H1 (cell line): ENCODE measurements at regions of chr7 and their contacts with region 1.

Region 1: DNA sequence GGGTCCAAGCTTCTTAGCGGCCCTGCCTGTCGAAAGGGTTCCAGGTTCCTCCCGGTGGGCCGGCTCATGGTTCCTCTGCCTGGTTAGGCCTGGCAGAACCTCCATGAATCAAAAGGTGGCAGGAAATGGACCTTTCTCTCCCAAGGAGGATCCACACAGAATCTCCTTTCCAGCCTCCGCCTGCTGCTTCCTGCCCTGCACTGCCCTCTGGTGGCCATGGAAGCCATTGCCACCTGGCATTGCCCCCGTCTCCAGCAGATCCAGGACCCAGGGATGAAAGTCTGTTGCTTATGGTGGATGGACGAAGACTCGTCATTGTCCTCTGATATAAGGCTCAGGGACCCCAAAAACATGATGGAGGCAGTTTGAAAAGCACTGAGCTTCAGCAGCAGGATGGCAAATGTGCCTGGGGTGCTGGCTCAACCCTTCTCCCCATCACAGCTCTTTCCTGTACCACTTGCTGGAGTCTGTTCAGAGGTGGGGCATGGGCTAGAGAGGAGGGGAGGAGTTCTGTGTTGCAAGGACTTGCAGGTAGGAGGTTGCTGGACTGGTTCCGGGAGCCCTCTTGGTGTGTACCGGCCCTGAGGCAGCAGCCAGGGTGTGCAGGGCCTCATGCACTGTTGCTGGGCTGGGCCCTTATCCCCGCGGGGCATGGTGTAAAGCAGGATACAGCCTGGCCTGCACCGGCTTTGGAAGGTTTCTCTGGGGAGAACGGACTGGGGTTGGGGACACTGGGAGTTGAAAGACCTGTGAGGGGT is 11.3 kb upstream of the INMT start:
- DNase-seq: peak in 1 of 2 experiments; percentile 97
- H3K4me3 ChIP-seq: no peak overlapping the region
- H3K27ac ChIP-seq: no peak overlapping the region
- H3K4me1 ChIP-seq: no peaks in the 10 kb centered on the region; a peak in 1 of 7 replicates
- H3K27me3 ChIP-seq: no peaks in the 10 kb centered on the region
- CTCF ChIP-seq: peak; percentile 96 to 99 (median 99)
- EP300 ChIP-seq: no peak; a peak in 1 of 3 replicates
- POLR2A ChIP-seq: no peak
- RAD21 ChIP-seq: peak; percentile 99

Region 2: GRCh38 chr7:30650421-30650808 is 90.2 kb before region 1 on chr7:
- CTCF ChIA-PET with region 1: interaction called, 14 read pairs
- POLR2A ChIA-PET with region 1: no interaction called
- DNase-seq: no peak
- H3K4me3 ChIP-seq: no peak overlapping the region
- H3K27ac ChIP-seq: no peak overlapping the region
- H3K4me1 ChIP-seq: peaks cover 0 to 2% (median 0%) of the 10 kb centered on the region in 4 experiments; a peak in 2 of 7 replicates
- H3K27me3 ChIP-seq: no peaks in the 10 kb centered on the region
- CTCF ChIP-seq: peak in 1 of 3 experiments; percentile 5; a peak in 1 of 4 replicates
- EP300 ChIP-seq: no peak
- POLR2A ChIP-seq: no peak
- RAD21 ChIP-seq: 0 out of 4 replicates have a peak, but pooled peaks of 1 of the 2 experiments have one; percentile 3

Region 3: DNA sequence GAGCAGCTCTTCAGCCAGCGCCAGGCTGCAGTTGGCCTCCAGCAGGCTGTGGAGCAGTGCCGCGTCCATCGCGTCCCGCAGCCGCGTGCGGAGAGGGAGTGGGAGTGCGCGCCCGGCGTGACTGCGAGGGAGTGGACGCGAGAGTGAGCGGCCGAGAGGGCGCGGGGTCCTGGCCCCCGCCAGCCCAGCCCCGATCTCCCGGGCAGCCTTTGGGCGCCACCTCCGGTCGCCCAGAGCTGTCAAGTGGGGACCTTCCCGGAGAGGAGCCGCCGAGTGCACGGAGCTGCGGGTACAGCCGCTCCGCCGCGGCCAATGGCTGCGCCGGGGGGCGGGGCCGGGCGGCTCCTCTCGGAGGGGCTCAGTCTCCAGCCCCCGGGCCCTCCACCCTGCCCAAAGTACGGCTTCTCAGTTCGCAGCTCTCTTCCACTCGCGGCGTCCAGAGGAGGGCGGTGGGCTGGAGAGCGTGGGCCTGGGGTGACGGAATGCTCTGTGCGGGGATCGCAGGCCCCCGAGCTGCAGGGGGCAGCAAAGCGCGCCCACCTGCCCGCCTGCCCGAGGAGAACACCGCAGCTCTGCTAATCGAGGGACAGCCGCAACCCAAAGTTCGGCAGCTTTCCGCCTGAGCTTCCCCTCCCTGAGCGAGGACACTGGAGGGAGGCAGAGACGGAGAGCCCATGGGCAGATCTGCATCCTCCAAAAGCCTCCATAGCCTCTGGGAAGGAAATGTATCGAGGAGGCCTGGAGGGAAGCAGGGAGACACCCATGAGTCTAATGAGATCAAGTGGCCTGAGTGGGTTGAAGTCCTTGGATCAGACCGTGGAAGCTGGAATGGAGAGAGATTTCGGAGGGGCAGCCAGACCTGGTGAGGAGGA is 58.2 kb before region 1 on chr7 and contains the start of gene CRHR2:
- CTCF ChIA-PET with region 1: interaction called, 55 read pairs
- POLR2A ChIA-PET with region 1: interaction called, 6 read pairs
- DNase-seq: peak in 1 of 2 experiments; percentile 81
- H3K4me3 ChIP-seq: peak within 1 kb of the TSS; percentile 42 to 67 (median 50)
- H3K27ac ChIP-seq: no peak within 1 kb of the TSS
- H3K4me1 ChIP-seq: peaks cover 6 to 16% (median 7%) of the 10 kb centered on the region in 4 experiments
- H3K27me3 ChIP-seq: peaks cover 10 to 49% (median 41%) of the 10 kb centered on the region in 4 experiments
- CTCF ChIP-seq: peak; percentile 45 to 63 (median 55); a peak in 3 of 4 replicates
- EP300 ChIP-seq: no peak
- POLR2A ChIP-seq: no peak
- RAD21 ChIP-seq: peak; percentile 38 to 50; a peak in 3 of 4 replicates
- total RNA-seq, gene CRHR2: 0.19 and 0.37 TPM in 2 replicates

Region 4: GRCh38 chr7:30708976-30709375 is 31.6 kb before region 1 on chr7:
- CTCF ChIA-PET with region 1: interaction called, 162 read pairs
- POLR2A ChIA-PET with region 1: no interaction called
- DNase-seq: no peak
- H3K4me3 ChIP-seq: no peak overlapping the region
- H3K27ac ChIP-seq: no peak overlapping the region; the same call in 1 of the 2 replicates
- H3K4me1 ChIP-seq: no peaks in the 10 kb centered on the region; a peak in 2 of 7 replicates
- H3K27me3 ChIP-seq: no peaks in the 10 kb centered on the region
- CTCF ChIP-seq: no peak
- EP300 ChIP-seq: no peak
- POLR2A ChIP-seq: no peak
- RAD21 ChIP-seq: no peak

Region 5: GRCh38 chr7:30750683-30751650 is 10.4 kb after region 1 on chr7:
- CTCF ChIA-PET with region 1: interaction called, 21 read pairs
- POLR2A ChIA-PET with region 1: interaction called, 3 read pairs
- DNase-seq: no peak
- H3K4me3 ChIP-seq: no peak overlapping the region
- H3K27ac ChIP-seq: no peak overlapping the region
- H3K4me1 ChIP-seq: no peaks in the 10 kb centered on the region; a peak in 1 of 7 replicates
- H3K27me3 ChIP-seq: no peaks in the 10 kb centered on the region; a peak in 1 of 7 replicates
- CTCF ChIP-seq: no peak
- EP300 ChIP-seq: no peak
- POLR2A ChIP-seq: no peak
- RAD21 ChIP-seq: no peak

Region 6: DNA sequence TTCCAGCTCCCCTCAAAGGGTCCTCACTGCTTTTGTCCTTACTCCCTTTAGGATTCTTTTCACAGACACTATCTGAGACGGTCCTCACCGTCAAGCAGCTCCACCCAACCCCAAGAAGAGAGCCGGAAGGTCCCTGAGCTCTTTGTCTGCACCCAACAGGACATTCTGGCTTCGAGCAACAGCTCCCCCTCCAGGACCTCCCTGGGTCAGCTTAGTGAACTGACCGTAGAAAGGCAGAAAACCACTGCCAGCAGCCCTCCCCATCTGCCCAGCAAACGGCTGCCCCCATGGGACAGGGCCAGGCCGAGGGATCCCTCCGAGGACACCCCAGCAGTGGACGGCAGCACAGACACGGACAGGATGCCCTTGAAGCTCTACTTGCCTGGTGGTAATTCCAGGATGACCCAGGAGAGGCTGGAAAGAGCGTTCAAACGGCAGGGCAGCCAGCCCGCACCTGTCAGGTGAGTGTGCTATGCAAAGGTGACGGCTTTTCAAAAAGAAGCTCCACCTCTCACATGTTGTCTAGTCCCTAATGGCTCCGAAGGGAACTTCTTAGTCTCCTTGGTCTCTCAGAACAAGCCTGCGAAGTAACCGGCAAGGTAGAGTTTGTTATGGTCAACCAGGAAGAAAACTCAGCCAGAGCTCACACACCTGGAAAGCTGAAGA is 50.6 kb after region 1 on chr7:
- CTCF ChIA-PET with region 1: interaction called, 23 read pairs
- POLR2A ChIA-PET with region 1: no interaction called
- DNase-seq: peak in 1 of 2 experiments; percentile 54
- H3K4me3 ChIP-seq: no peak overlapping the region
- H3K27ac ChIP-seq: no peak overlapping the region
- H3K4me1 ChIP-seq: 0 out of 7 replicates have a peak, but pooled peaks cover 0 to 3% (median 0%) of the 10 kb centered on the region in 4 experiments
- H3K27me3 ChIP-seq: no peaks in the 10 kb centered on the region
- CTCF ChIP-seq: peak; percentile 56 to 66 (median 60)
- EP300 ChIP-seq: no peak
- POLR2A ChIP-seq: no peak
- RAD21 ChIP-seq: peak; percentile 42 to 58; a peak in 3 of 4 replicates